Activated T-helper 2 cell treated with anti-CD3 and anti-CD28 coated beads, Interferon-gamma antibody, Interleukin-2, Interleukin-4, amounts not matched to agents 10 μg/mL and 5 μg/mL and 100 μg/mL, durations not matched to agents 14 hours and 24 hours and 36 hours (primary cell): ENCODE measurements at regions of chr7 and their contacts with region 1.

Region 1: GRCh38 chr7:44200647-44201461 is at the start of gene YKT6:
- DNase-seq: peak; percentile 92
- H3K4me3 Mint-ChIP-seq: peak within 1 kb of the TSS; percentile 88
- H3K27ac Mint-ChIP-seq: peak within 1 kb of the TSS; percentile 74
- H3K4me1 Mint-ChIP-seq: peaks cover 29% of the 10 kb centered on the region
- H3K27me3 Mint-ChIP-seq: no peaks in the 10 kb centered on the region
- total RNA-seq, gene YKT6: 73.1 and 76.4 TPM in 2 replicates

Region 2: DNA sequence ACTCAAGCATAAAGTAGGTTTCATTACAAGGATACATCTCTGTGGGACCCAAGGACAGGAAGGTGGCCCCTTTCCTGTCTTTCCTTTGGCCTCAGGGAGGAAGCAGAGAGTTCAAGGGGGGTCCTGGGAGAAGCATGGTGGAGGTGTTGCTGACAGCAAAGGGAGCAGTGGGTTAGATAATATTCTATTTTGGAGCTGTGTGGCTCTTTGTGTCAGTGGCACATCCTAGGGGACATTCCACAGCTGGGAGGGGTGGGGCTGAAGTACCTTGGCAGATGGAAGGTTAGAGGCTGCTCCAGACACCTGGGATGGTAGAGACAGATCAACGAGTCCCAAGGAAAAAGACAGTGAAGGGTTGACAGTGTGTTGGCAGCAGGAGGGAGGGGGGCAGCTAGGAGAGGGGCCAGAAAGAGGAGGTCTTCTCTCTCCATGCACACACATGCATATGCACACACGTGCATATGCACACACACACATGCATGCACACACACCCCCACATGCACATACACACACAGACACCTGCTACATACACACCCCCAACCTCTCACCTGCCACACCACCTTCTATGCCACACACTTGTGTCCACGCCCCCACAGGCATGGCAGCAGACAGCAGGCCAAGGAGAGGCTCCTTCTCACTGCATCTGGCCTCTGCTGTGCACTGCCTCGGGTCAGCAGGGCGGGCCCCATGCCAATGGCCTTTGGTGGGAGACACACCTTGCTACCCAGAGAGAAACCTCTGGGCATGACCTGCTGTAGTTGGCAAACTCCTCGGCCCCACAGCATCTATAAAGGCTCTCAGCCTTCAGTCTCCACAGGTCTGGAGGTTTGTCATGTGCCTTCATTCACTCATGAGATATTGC is 71.9 kb before region 1 on chr7:
- intact Hi-C with region 1: loop called (anchors 5 kb)
- DNase-seq: no peak
- H3K4me3 Mint-ChIP-seq: no peak overlapping the region
- H3K27ac Mint-ChIP-seq: no peak overlapping the region
- H3K4me1 Mint-ChIP-seq: peaks cover 5% of the 10 kb centered on the region
- H3K27me3 Mint-ChIP-seq: peaks cover 15% of the 10 kb centered on the region

Region 3: DNA sequence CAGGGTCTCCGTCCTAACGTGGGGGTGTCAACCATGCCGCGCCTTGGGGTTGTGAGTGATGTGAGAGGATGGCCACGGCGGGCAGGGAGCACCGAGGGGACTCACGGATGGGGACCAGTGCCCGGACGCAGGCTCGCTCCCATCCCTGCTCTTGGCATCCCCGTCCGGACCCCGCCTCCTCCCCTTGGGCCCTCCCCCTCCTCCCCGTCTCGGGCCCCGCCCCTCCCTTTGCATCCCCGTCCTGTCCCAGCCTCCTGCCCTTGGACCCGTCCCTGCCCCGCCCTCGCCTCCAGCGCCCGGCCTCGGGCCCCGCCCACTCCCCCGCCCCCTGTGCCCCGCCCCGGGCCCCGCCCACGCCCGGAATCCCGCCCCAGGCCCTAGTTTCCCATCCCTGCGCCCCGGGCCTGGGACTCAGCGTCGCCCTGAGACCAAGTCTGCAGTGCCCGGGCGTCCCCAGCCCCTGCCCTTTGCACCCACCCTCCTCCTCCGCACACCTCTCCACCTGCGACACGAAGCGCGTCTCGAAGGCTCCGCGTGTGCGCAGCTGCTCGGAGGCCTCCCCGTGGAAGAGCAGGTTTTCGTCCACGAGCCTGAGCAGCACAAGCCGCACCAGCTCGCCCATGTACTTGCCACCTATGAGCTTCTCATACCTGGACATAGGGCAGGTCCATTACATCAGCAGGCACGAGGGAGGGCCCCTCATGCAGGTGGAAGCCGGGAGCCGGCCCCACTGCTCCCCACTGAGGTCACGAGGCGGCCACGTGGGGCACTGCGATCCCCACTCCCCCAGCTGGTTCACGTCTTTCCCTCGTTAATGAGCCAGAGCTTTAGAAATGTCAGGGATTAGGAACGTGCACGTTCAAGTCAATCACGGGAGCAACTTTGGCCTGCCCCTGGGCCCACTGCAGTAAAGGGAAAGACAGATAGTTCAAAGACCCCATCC is 54.6 kb before region 1 on chr7:
- intact Hi-C with region 1: loop called (anchors 5 kb)
- DNase-seq: peak; percentile 69
- H3K4me3 Mint-ChIP-seq: peak overlapping the region; percentile 75
- H3K27ac Mint-ChIP-seq: no peak overlapping the region
- H3K4me1 Mint-ChIP-seq: no peaks in the 10 kb centered on the region
- H3K27me3 Mint-ChIP-seq: peaks cover 8% of the 10 kb centered on the region